B cell (primary cell): ENCODE measurements at regions of chr16 and their contacts with region 1.

Region 1: GRCh38 chr16:66552286-66553177 is at the start of gene CKLF:
- DNase-seq: peak; percentile 95
- ATAC-seq: peak; percentile 66
- H3K4me3 ChIP-seq: peak within 1 kb of the TSS; percentile 60 to 92 (median 71)
- H3K4me3 Mint-ChIP-seq: peak within 1 kb of the TSS; percentile 95
- H3K27ac ChIP-seq: peak within 1 kb of the TSS; percentile 71 to 75
- H3K27ac Mint-ChIP-seq: peak within 1 kb of the TSS; percentile 98
- H3K4me1 ChIP-seq: peaks cover 52 to 60% of the 10 kb centered on the region in 2 donors
- H3K4me1 Mint-ChIP-seq: peaks cover 79% of the 10 kb centered on the region
- H3K27me3 ChIP-seq: no peaks in the 10 kb centered on the region
- H3K27me3 Mint-ChIP-seq: no peaks in the 10 kb centered on the region
- CTCF ChIP-seq: no peak
- total RNA-seq, gene CKLF: 28.9 and 30.4 TPM in 2 replicates

Region 2: GRCh38 chr16:66070140-66070917 is 482.2 kb before region 1 on chr16:
- CTCF ChIA-PET with region 1: no interaction called
- POLR2A ChIA-PET with region 1: no interaction called
- intact Hi-C with region 1: no loop called
- DNase-seq: no peak
- ATAC-seq: no peak
- H3K4me3 ChIP-seq: no peak overlapping the region
- H3K4me3 Mint-ChIP-seq: no peak overlapping the region
- H3K27ac ChIP-seq: no peak overlapping the region
- H3K27ac Mint-ChIP-seq: no peak overlapping the region
- H3K4me1 ChIP-seq: no peaks in the 10 kb centered on the region
- H3K4me1 Mint-ChIP-seq: no peaks in the 10 kb centered on the region
- H3K27me3 ChIP-seq: peaks cover 0 to 4% (median 0%) of the 10 kb centered on the region in 4 experiments
- H3K27me3 Mint-ChIP-seq: peaks cover 15% of the 10 kb centered on the region
- CTCF ChIP-seq: no peak

Region 3: DNA sequence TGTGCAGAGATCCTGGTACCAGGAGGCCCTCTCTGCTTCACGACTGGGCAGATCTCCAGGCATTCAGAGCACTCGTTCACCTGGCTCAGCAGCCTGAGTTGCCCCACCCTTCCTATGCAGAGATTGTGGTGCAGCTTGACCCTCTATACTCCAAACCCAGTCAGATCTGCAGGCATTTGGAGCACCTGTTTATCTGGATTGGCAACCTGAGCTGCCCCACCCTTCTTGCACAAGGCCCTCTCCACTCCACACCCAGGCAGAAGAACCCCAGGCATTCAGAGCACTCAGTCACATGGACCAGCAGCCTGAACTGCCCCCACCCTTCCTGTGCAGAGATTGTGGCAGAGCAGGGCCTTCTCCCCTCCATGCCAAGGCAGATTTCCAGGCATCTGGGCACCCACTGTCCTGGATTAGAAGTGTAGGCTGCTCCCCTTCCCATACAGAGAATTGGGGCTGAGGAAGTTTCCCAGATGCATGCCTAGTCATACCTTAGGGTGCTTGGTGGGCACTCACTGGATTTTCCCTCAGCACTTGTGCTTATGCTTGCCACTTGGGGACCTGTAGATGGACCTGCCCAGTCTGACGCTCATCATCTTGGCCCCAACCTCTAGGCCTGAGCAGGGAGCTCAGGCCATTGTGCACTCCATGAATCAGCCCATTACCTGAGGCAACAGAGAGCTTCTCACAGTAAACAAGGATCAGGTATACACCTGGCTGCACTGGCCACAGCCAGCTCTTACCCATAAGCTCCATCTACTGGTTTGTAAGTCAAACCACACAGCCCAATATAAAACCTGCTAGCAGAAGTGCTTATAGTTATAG is 274.2 kb before region 1 on chr16:
- CTCF ChIA-PET with region 1: no interaction called
- POLR2A ChIA-PET with region 1: no interaction called
- intact Hi-C with region 1: no loop called
- DNase-seq: no peak
- ATAC-seq: no peak
- H3K4me3 ChIP-seq: no peak overlapping the region
- H3K4me3 Mint-ChIP-seq: no peak overlapping the region
- H3K27ac ChIP-seq: no peak overlapping the region
- H3K27ac Mint-ChIP-seq: no peak overlapping the region
- H3K4me1 ChIP-seq: no peaks in the 10 kb centered on the region
- H3K4me1 Mint-ChIP-seq: no peaks in the 10 kb centered on the region
- H3K27me3 ChIP-seq: peaks cover 0 to 9% (median 3%) of the 10 kb centered on the region in 4 experiments
- H3K27me3 Mint-ChIP-seq: peaks cover 55% of the 10 kb centered on the region
- CTCF ChIP-seq: no peak

Region 4: GRCh38 chr16:66483689-66484481 is 68.6 kb before region 1 on chr16:
- CTCF ChIA-PET with region 1: interaction called, 17 read pairs
- POLR2A ChIA-PET with region 1: interaction called, 3 read pairs
- intact Hi-C with region 1: loop called (anchors 2 kb)
- DNase-seq: peak; percentile 81
- ATAC-seq: peak; percentile 93
- H3K4me3 ChIP-seq: no peak overlapping the region
- H3K4me3 Mint-ChIP-seq: no peak overlapping the region
- H3K27ac ChIP-seq: no peak overlapping the region
- H3K27ac Mint-ChIP-seq: peak overlapping the region; percentile 5
- H3K4me1 ChIP-seq: peaks cover 14 to 20% of the 10 kb centered on the region in 2 donors
- H3K4me1 Mint-ChIP-seq: peaks cover 15% of the 10 kb centered on the region
- H3K27me3 ChIP-seq: peaks cover 0 to 9% (median under 1%) of the 10 kb centered on the region in 4 experiments
- H3K27me3 Mint-ChIP-seq: peaks cover 3% of the 10 kb centered on the region
- CTCF ChIP-seq: peak; percentile 96

Region 5: GRCh38 chr16:66516808-66517585 is 35.5 kb before region 1 on chr16:
- CTCF ChIA-PET with region 1: interaction called, 46 read pairs
- POLR2A ChIA-PET with region 1: interaction called, 22 read pairs
- intact Hi-C with region 1: loop called (anchors 1 kb)
- DNase-seq: peak; percentile 94
- ATAC-seq: peak; percentile 89
- H3K4me3 ChIP-seq: peak overlapping the region; percentile 41 to 62 (median 53)
- H3K4me3 Mint-ChIP-seq: peak overlapping the region; percentile 96
- H3K27ac ChIP-seq: peak overlapping the region; percentile 94 to 97
- H3K27ac Mint-ChIP-seq: peak overlapping the region; percentile 99
- H3K4me1 ChIP-seq: peaks cover 59 to 63% of the 10 kb centered on the region in 2 donors
- H3K4me1 Mint-ChIP-seq: peaks cover 72% of the 10 kb centered on the region
- H3K27me3 ChIP-seq: peaks cover 0 to 3% (median 0%) of the 10 kb centered on the region in 4 experiments
- H3K27me3 Mint-ChIP-seq: peaks cover under 1% of the 10 kb centered on the region
- CTCF ChIP-seq: no peak

Region 6: GRCh38 chr16:66528294-66528693 is 24.2 kb before region 1 on chr16:
- CTCF ChIA-PET with region 1: interaction called, 46 read pairs
- POLR2A ChIA-PET with region 1: interaction called, 22 read pairs
- intact Hi-C with region 1: loop called (anchors 1 kb)
- DNase-seq: no peak
- ATAC-seq: no peak
- H3K4me3 ChIP-seq: no peak overlapping the region
- H3K4me3 Mint-ChIP-seq: no peak overlapping the region
- H3K27ac ChIP-seq: no peak overlapping the region
- H3K27ac Mint-ChIP-seq: no peak overlapping the region
- H3K4me1 ChIP-seq: peaks cover 29 to 36% of the 10 kb centered on the region in 2 donors
- H3K4me1 Mint-ChIP-seq: peaks cover 36% of the 10 kb centered on the region
- H3K27me3 ChIP-seq: no peaks in the 10 kb centered on the region
- H3K27me3 Mint-ChIP-seq: no peaks in the 10 kb centered on the region
- CTCF ChIP-seq: no peak

Region 7: GRCh38 chr16:66588981-66589713 is 36.6 kb after region 1 on chr16:
- CTCF ChIA-PET with region 1: interaction called, 8 read pairs
- POLR2A ChIA-PET with region 1: no interaction called
- intact Hi-C with region 1: loop called (anchors 1 kb)
- DNase-seq: peak; percentile 79
- ATAC-seq: peak; percentile 90
- H3K4me3 ChIP-seq: no peak overlapping the region
- H3K4me3 Mint-ChIP-seq: peak overlapping the region; percentile 75
- H3K27ac ChIP-seq: no peak overlapping the region
- H3K27ac Mint-ChIP-seq: peak overlapping the region; percentile 59
- H3K4me1 ChIP-seq: peaks cover 24 to 34% of the 10 kb centered on the region in 2 donors
- H3K4me1 Mint-ChIP-seq: peaks cover 30% of the 10 kb centered on the region
- H3K27me3 ChIP-seq: peaks cover 0 to 20% (median 6%) of the 10 kb centered on the region in 4 experiments
- H3K27me3 Mint-ChIP-seq: peaks cover 9% of the 10 kb centered on the region
- CTCF ChIP-seq: peak; percentile 83

Region 8: GRCh38 chr16:66687906-66688625 is 135.5 kb after region 1 on chr16:
- CTCF ChIA-PET with region 1: no interaction called
- POLR2A ChIA-PET with region 1: no interaction called
- intact Hi-C with region 1: no loop called
- DNase-seq: no peak
- ATAC-seq: no peak
- H3K4me3 ChIP-seq: no peak overlapping the region
- H3K4me3 Mint-ChIP-seq: no peak overlapping the region
- H3K27ac ChIP-seq: no peak overlapping the region
- H3K27ac Mint-ChIP-seq: no peak overlapping the region
- H3K4me1 ChIP-seq: no peaks in the 10 kb centered on the region
- H3K4me1 Mint-ChIP-seq: no peaks in the 10 kb centered on the region
- H3K27me3 ChIP-seq: peaks cover 0 to 21% (median 11%) of the 10 kb centered on the region in 4 experiments
- H3K27me3 Mint-ChIP-seq: peaks cover 38% of the 10 kb centered on the region
- CTCF ChIP-seq: no peak

Region 9: GRCh38 chr16:68426351-68426660 is 1873.8 kb after region 1 on chr16:
- CTCF ChIA-PET with region 1: no interaction called
- POLR2A ChIA-PET with region 1: no interaction called
- intact Hi-C with region 1: no loop called
- DNase-seq: no peak
- ATAC-seq: no peak
- H3K4me3 ChIP-seq: no peak overlapping the region
- H3K4me3 Mint-ChIP-seq: no peak overlapping the region
- H3K27ac ChIP-seq: no peak overlapping the region
- H3K27ac Mint-ChIP-seq: no peak overlapping the region
- H3K4me1 ChIP-seq: no peaks in the 10 kb centered on the region
- H3K4me1 Mint-ChIP-seq: peaks cover 3% of the 10 kb centered on the region
- H3K27me3 ChIP-seq: no peaks in the 10 kb centered on the region
- H3K27me3 Mint-ChIP-seq: no peaks in the 10 kb centered on the region
- CTCF ChIP-seq: no peak